ENCODE measurements at regions of chr12 and their contacts with region 1.

Region 1: DNA sequence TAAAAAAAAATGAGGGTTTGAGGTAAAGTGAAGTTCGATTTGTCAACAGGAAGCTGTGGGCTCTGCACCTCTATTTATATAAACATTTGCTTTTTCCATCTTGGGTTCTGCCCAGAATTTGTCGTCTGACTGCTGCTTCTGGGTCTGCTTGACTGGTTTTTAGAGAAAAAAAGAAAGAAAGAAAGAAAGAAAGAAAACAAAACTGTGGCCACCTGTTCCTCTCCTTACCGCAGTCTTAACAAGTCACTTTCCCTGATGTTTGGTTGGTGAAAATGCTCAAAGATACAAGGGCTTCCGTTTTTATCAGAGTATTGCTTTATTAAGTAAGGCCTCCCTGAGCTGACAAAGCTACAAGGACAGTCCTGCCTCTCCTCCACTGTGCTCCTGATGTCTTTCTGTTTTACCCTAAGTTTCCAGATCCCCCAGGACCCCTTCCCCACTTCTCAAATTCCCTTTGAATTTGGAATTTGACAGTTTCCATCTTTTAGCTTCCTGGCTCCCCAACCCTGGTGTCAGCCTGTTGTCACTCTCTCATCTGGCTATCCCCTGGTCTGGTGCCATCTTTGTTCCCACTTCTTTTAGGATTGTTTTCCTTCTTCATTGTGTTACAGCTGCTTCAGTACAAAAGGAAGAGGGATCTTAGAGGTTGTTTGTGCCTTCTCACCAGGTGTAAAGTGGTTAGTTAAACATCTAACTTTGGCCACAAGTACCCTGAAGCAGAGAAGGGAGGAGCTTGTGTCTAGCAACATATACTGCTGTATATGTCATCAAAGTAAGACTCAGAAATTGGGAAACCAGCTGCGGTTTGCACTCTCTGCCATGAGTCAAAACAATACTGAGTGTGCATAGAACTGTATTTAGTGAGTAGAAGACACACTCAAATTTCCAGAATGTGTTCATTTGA is 18.0 kb downstream of the MFAP5 start:
- DNase-seq: peak; percentile 84
- H3K4me3 Mint-ChIP-seq: peak overlapping the region; percentile 6
- H3K27ac Mint-ChIP-seq: peak overlapping the region; percentile 43
- H3K4me1 Mint-ChIP-seq: peaks cover 44% of the 10 kb centered on the region
- H3K27me3 Mint-ChIP-seq: peaks cover 10% of the 10 kb centered on the region

Region 2: DNA sequence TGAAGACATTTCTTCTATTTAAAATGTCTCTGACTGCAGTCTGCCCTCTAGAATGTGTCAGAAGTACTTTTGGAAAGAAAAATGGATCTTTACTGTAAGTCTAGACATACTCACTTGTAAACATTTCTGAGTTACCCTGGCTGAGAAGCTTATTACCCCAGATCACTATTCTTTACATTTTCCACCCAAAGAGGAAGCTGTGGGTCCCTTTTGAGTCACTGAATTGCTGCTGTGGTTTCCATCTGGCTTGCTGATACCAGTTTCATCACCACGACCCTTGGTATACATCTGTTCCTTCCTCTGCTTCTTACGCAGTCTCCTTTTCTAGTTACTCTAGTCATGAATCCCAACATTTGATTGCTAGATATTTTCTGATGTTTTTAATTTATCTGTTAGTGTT is 151.5 kb before region 1 on chr12:
- CTCF ChIA-PET with region 1: interaction called, 3 read pairs
- POLR2A ChIA-PET with region 1: interaction called, 4 read pairs
- intact Hi-C with region 1: loop called (anchors 1 kb)
- DNase-seq: peak; percentile 79
- H3K4me3 Mint-ChIP-seq: no peak overlapping the region
- H3K27ac Mint-ChIP-seq: peak overlapping the region; percentile 56
- H3K4me1 Mint-ChIP-seq: peaks cover 24% of the 10 kb centered on the region
- H3K27me3 Mint-ChIP-seq: peaks cover 3% of the 10 kb centered on the region

Region 3: GRCh38 chr12:8590842-8591550 is 53.6 kb before region 1 on chr12:
- CTCF ChIA-PET with region 1: no interaction called
- POLR2A ChIA-PET with region 1: no interaction called
- intact Hi-C with region 1: no loop called
- DNase-seq: no peak
- H3K4me3 Mint-ChIP-seq: no peak overlapping the region
- H3K27ac Mint-ChIP-seq: no peak overlapping the region
- H3K4me1 Mint-ChIP-seq: peaks cover 8% of the 10 kb centered on the region
- H3K27me3 Mint-ChIP-seq: no peaks in the 10 kb centered on the region

Region 4: DNA sequence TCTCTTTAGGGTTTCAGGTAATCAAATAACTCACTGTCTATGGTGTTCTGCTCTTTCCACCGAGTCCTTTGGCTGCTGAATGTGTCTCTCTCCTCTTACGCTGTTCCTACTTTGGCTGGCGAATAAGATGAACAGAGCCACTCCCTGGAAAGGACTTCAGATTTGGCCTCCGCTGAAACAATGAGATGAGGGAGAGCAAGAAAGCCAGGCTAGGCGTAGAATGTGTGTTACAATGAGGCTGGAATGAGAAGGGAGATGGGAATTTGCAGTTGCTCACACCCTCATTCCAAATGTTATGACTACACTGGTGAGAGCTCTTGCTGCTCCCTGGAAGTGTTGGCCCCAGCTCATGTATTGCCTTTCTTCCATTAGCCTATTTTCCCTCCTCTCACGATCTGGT is 18.0 kb after region 1 on chr12 and contains the start of gene MFAP5:
- CTCF ChIA-PET with region 1: interaction called, 16 read pairs
- POLR2A ChIA-PET with region 1: no interaction called
- intact Hi-C with region 1: no loop called
- DNase-seq: no peak
- H3K4me3 Mint-ChIP-seq: no peak within 1 kb of the TSS
- H3K27ac Mint-ChIP-seq: no peak within 1 kb of the TSS
- H3K4me1 Mint-ChIP-seq: no peaks in the 10 kb centered on the region
- H3K27me3 Mint-ChIP-seq: peaks cover 5% of the 10 kb centered on the region
- total RNA-seq, gene MFAP5: not detected

Region 5: GRCh38 chr12:8709124-8709830 is 64.7 kb after region 1 on chr12:
- CTCF ChIA-PET with region 1: no interaction called
- POLR2A ChIA-PET with region 1: no interaction called
- intact Hi-C with region 1: no loop called
- DNase-seq: no peak
- H3K4me3 Mint-ChIP-seq: no peak overlapping the region
- H3K27ac Mint-ChIP-seq: no peak overlapping the region
- H3K4me1 Mint-ChIP-seq: peaks cover 5% of the 10 kb centered on the region
- H3K27me3 Mint-ChIP-seq: no peaks in the 10 kb centered on the region

Region 6: GRCh38 chr12:8784489-8784888 is 139.9 kb after region 1 on chr12:
- CTCF ChIA-PET with region 1: no interaction called
- POLR2A ChIA-PET with region 1: no interaction called
- intact Hi-C with region 1: no loop called
- DNase-seq: no peak
- H3K4me3 Mint-ChIP-seq: no peak overlapping the region
- H3K27ac Mint-ChIP-seq: no peak overlapping the region
- H3K4me1 Mint-ChIP-seq: no peaks in the 10 kb centered on the region
- H3K27me3 Mint-ChIP-seq: no peaks in the 10 kb centered on the region

Region 7: DNA sequence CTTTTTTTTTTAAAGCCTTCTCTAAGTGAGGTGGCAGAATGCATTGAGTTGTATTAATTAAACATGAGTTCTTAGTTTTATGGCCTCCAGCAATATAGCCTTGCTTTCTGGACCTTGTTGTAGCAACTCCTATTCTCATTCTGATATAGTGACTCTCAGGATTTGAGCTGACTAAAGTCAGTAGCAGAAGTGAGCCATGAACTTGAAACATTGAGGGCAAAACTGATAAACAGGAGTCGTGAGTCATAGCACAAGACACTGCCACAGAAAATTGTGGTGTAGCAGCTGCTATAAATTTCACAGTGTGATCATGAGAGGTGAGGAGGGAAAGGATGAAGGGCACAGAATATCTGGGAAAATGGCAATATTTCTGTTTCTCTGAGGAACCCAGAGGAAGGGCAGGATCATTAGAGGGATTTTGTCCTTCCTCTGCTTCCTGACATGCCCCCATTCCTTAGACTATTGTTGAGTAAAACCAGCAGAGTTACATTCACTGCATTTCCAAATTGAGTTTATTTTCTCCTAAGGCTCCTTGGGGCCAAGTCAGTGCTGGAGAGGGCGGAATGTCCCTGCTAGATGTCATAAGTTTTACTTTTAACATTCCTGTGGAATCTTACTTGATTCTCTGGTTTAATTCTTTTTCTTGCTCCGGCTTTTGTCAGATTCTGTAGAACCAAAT is 352.2 kb after region 1 on chr12:
- CTCF ChIA-PET with region 1: no interaction called
- POLR2A ChIA-PET with region 1: no interaction called
- intact Hi-C with region 1: loop called (anchors 2 kb)
- DNase-seq: peak; percentile 58
- H3K4me3 Mint-ChIP-seq: no peak overlapping the region
- H3K27ac Mint-ChIP-seq: no peak overlapping the region
- H3K4me1 Mint-ChIP-seq: peaks cover 70% of the 10 kb centered on the region
- H3K27me3 Mint-ChIP-seq: no peaks in the 10 kb centered on the region